ENCODE measurements at regions of chr2 and their contacts with region 1.

Region 1: GRCh38 chr2:213151437-213152064 is at the start of gene IKZF2:
- DNase-seq: peak; percentile 94
- ATAC-seq: peak; percentile 86
- H3K4me3 ChIP-seq: peak within 1 kb of the TSS; percentile 73
- H3K27ac ChIP-seq: peak within 1 kb of the TSS; percentile 95
- H3K4me1 ChIP-seq: no peaks in the 10 kb centered on the region
- H3K27me3 ChIP-seq: no peaks in the 10 kb centered on the region
- CTCF ChIP-seq: no peak
- POLR2A ChIP-seq: 0 out of 2 replicates have a peak, but pooled peaks have one; percentile 31
- RAD21 ChIP-seq: 0 out of 2 replicates have a peak, but pooled peaks have one; percentile 3
- total RNA-seq, gene IKZF2: 19.4 and 25.5 TPM in 2 replicates

Region 2: DNA sequence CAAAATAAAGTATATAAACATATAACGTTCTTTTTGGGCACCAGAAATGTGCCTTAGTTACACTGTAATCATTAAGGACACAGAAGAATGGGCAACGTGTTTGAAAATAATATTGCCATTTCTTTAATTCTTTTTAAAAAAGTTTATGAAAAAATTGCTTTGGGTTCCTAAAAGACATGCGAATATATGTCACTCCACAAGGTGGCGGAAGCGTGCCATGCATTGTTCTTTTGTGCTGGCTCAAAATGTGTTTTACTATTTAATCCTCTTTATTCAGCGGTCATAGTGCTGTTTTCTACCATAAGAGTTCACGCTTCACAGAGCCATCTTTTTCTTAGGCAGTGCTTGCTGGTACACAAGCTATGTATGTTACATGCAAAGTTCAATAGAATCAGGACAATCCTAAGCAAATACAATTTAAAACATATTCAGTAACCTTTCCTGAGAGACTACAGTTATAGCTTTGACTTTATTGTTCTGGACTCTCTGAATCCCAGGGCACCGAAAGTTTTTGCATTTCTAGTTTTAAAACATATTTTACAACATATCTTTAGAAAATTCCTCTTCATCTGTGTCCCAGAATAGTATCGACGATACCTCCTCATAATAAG is 465.2 kb before region 1 on chr2:
- CTCF ChIA-PET with region 1: interaction called, 5 read pairs
- POLR2A ChIA-PET with region 1: no interaction called
- dilution Hi-C with region 1: no loop called
- in situ Hi-C with region 1: loop called (anchors 10 kb)
- intact Hi-C with region 1: loop called (anchors 1 kb)
- DNase-seq: peak; percentile 73
- ATAC-seq: peak; percentile 82
- H3K4me3 ChIP-seq: no peak overlapping the region
- H3K27ac ChIP-seq: no peak overlapping the region
- H3K4me1 ChIP-seq: peaks cover 3% of the 10 kb centered on the region
- H3K27me3 ChIP-seq: no peaks in the 10 kb centered on the region
- CTCF ChIP-seq: peak; percentile 97
- POLR2A ChIP-seq: 0 out of 2 replicates have a peak, but pooled peaks have one; percentile 34
- RAD21 ChIP-seq: peak; percentile 94

Region 3: DNA sequence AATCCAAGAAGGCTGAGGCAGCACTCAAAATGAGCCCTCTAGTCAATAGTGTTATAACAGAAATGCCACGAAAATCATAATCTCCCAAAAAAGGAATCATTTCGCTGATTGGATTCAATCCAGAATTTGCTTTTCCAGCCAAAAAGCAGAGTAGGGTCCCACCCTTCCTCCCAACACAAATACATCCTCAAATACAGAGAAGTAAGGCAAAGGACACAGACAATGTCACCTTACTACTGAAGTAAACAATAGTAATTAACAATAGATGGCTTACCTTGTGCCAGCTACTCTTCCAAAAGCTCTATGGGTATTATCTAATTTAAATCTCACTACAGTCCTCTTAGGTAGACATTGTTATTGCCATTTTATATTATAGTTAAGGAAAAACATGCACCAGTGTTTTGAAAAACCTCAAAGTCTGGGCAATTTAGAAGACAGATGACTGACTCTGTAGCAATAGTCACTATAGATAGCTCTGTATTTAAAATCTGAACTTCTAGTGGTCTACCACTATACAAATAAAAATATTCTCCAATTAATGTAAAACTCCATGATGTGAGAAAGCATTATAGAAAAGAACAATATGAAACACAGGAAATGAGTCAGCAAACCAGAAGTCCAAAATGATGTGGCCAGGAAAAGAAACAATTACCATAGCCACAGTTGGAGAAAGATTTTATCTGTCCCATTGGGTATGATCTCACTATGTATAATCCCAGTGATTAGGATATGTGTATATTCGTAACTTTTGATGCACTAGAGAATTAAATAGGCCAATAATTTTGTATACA is 307.9 kb before region 1 on chr2:
- CTCF ChIA-PET with region 1: no interaction called
- POLR2A ChIA-PET with region 1: interaction called, 3 read pairs
- dilution Hi-C with region 1: no loop called
- in situ Hi-C with region 1: no loop called
- intact Hi-C with region 1: loop called (anchors 2 kb)
- DNase-seq: peak; percentile 91
- ATAC-seq: peak; percentile 55
- H3K4me3 ChIP-seq: no peak overlapping the region
- H3K27ac ChIP-seq: peak overlapping the region; percentile 43; the same call in 1 of the 2 replicates
- H3K4me1 ChIP-seq: peaks cover 8% of the 10 kb centered on the region
- H3K27me3 ChIP-seq: no peaks in the 10 kb centered on the region
- CTCF ChIP-seq: no peak
- POLR2A ChIP-seq: no peak
- RAD21 ChIP-seq: no peak

Region 4: DNA sequence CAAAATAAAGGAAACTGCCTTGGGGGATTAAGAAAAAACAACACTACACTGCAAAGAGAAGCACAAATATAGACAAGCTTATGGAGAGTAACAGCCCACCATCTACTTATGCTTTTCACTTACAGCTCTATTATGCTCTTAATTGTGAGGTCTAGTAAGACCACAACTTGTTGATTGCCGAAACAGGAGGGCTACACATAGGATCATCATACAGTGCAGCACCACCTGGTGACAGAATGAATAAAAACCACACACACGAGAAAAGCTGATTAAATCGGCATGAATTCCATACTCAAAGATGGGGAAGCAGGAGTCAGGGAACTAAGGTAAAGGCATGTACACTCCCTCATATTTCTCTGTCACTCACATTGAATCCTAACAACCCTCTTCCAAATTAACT is 259.4 kb before region 1 on chr2:
- CTCF ChIA-PET with region 1: interaction called, 3 read pairs
- POLR2A ChIA-PET with region 1: no interaction called
- dilution Hi-C with region 1: no loop called
- in situ Hi-C with region 1: no loop called
- intact Hi-C with region 1: loop called (anchors 1 kb)
- DNase-seq: peak; percentile 64
- ATAC-seq: peak; percentile 69
- H3K4me3 ChIP-seq: no peak overlapping the region
- H3K27ac ChIP-seq: no peak overlapping the region
- H3K4me1 ChIP-seq: no peaks in the 10 kb centered on the region
- H3K27me3 ChIP-seq: no peaks in the 10 kb centered on the region
- CTCF ChIP-seq: peak; percentile 54
- POLR2A ChIP-seq: no peak
- RAD21 ChIP-seq: peak; percentile 61

Region 5: GRCh38 chr2:212974692-212975091 is 176.9 kb before region 1 on chr2:
- CTCF ChIA-PET with region 1: no interaction called
- POLR2A ChIA-PET with region 1: no interaction called
- dilution Hi-C with region 1: no loop called
- in situ Hi-C with region 1: no loop called
- intact Hi-C with region 1: loop called (anchors 5 kb)
- DNase-seq: peak; percentile 85
- ATAC-seq: peak; percentile 74
- H3K4me3 ChIP-seq: no peak overlapping the region
- H3K27ac ChIP-seq: no peak overlapping the region
- H3K4me1 ChIP-seq: peaks cover 15% of the 10 kb centered on the region
- H3K27me3 ChIP-seq: no peaks in the 10 kb centered on the region
- CTCF ChIP-seq: no peak
- POLR2A ChIP-seq: no peak
- RAD21 ChIP-seq: no peak

Region 6: GRCh38 chr2:213161759-213162515 is 10.4 kb after region 1 on chr2:
- CTCF ChIA-PET with region 1: interaction called, 11 read pairs
- POLR2A ChIA-PET with region 1: interaction called, 3 read pairs
- dilution Hi-C with region 1: no loop called
- in situ Hi-C with region 1: no loop called
- intact Hi-C with region 1: no loop called
- DNase-seq: peak; percentile 76
- ATAC-seq: peak; percentile 48
- H3K4me3 ChIP-seq: no peak overlapping the region
- H3K27ac ChIP-seq: peak overlapping the region; percentile 81
- H3K4me1 ChIP-seq: peaks cover 5% of the 10 kb centered on the region
- H3K27me3 ChIP-seq: no peaks in the 10 kb centered on the region
- CTCF ChIP-seq: no peak
- POLR2A ChIP-seq: no peak
- RAD21 ChIP-seq: no peak

Measured in IMR-90 (cell line).